Caco-2 (cell line): ENCODE measurements at regions of chr5 and their contacts with region 1.

Region 1: DNA sequence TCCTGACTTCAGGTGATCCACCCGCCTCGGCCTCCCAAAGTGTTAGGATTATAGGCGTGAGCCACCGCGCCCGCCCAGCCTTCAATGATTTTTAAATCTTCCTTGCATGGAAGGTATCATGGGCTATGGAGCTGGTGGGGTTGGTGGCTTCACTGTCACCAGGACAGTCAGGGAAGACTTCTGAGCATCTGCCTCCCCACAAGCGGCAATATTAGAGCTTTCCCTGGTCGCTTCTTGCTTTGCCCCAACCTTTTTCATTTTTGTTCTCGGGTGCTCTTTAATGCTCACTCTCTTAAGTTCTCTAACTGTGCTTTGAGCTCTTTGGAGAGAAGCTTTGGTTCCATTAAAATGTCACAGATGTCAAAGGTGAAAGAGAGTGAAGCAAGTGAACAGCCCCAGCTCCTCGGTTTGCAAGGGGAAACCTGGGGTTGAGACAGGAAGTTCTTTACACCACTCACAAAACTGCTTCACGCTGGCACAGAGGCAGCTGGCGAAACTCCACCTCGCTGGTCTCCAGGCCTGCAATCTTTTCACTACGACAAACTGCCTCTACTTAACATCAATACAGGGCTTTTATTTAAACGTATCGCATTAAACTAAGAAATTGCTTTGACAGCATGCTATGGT is 142.5 kb upstream of the RETREG1 start:
- DNase-seq: no peak
- H3K4me3 ChIP-seq: no peak overlapping the region
- H3K4me3 Mint-ChIP-seq: no peak overlapping the region
- H3K27ac Mint-ChIP-seq: peak overlapping the region; percentile 55
- H3K4me1 ChIP-seq: peaks cover 40% of the 10 kb centered on the region
- H3K4me1 Mint-ChIP-seq: peaks cover 7% of the 10 kb centered on the region
- H3K27me3 ChIP-seq: no peaks in the 10 kb centered on the region
- H3K27me3 Mint-ChIP-seq: no peaks in the 10 kb centered on the region
- CTCF ChIP-seq: no peak

Region 2: GRCh38 chr5:16690243-16690852 is 68.9 kb before region 1 on chr5:
- CTCF ChIA-PET with region 1: no interaction called
- POLR2A ChIA-PET with region 1: no interaction called
- intact Hi-C with region 1: loop called (anchors 10 kb)
- DNase-seq: peak; percentile 54 to 76
- H3K4me3 ChIP-seq: no peak overlapping the region
- H3K4me3 Mint-ChIP-seq: no peak overlapping the region
- H3K27ac Mint-ChIP-seq: peak overlapping the region; percentile 13
- H3K4me1 ChIP-seq: no peaks in the 10 kb centered on the region
- H3K4me1 Mint-ChIP-seq: no peaks in the 10 kb centered on the region
- H3K27me3 ChIP-seq: no peaks in the 10 kb centered on the region
- H3K27me3 Mint-ChIP-seq: no peaks in the 10 kb centered on the region
- CTCF ChIP-seq: peak; percentile 79 to 81

Region 3: DNA sequence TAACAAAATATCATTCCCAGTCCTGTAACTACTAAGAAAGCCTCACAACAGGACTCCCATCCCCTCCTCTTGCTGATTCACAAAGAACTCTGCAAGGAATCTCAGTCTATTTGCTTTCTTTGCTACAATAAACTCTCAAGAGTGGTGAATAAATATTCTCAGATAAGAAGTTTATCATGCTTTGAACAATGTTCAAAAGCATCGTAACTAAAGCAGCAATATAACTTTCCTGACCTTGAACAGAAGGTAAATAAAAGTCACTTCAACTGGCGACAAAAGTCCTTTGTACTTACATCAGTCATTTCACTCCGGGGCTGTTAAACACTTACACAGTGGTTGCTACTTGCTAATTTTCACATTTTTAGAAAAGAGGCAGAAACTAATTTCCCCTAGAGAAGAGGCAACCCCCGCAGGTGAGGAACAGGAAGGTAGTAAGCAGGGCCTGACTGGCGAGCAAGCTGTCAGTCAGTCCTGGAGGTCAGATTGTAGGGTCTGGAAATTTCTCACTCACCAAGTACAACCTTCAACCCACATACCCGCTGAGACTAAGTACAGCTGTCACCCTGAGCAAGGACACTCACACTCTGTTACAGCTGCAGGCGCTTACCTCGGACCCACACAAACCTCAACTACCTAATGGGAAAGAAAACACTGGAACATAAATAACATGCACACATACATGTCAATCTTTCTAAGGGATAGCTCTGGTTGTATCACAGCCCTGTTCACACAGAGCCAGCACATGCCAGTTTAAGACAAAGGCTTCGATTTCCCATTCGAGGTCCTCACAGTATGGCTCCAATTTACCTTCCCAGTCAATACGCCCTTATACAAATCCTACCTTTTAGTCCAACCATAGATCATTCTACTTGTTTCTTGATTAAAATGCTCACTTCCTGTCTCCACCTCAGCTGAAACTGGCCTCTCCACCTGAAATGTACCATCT is 37.8 kb before region 1 on chr5:
- CTCF ChIA-PET with region 1: no interaction called
- POLR2A ChIA-PET with region 1: no interaction called
- intact Hi-C with region 1: loop called (anchors 1 kb)
- DNase-seq: peak; percentile 69 to 73
- H3K4me3 ChIP-seq: no peak overlapping the region
- H3K4me3 Mint-ChIP-seq: peak overlapping the region; percentile 37
- H3K27ac Mint-ChIP-seq: peak overlapping the region; percentile 92
- H3K4me1 ChIP-seq: peaks cover 36% of the 10 kb centered on the region
- H3K4me1 Mint-ChIP-seq: peaks cover 20% of the 10 kb centered on the region
- H3K27me3 ChIP-seq: no peaks in the 10 kb centered on the region; the same call in 1 of the 2 replicates
- H3K27me3 Mint-ChIP-seq: no peaks in the 10 kb centered on the region
- CTCF ChIP-seq: no peak

Region 4: GRCh38 chr5:16736158-16736995 is 22.9 kb before region 1 on chr5:
- CTCF ChIA-PET with region 1: no interaction called
- POLR2A ChIA-PET with region 1: no interaction called
- intact Hi-C with region 1: loop called (anchors 1 kb)
- DNase-seq: peak; percentile 72 to 81
- H3K4me3 ChIP-seq: no peak overlapping the region
- H3K4me3 Mint-ChIP-seq: peak overlapping the region; percentile 12
- H3K27ac Mint-ChIP-seq: peak overlapping the region; percentile 91
- H3K4me1 ChIP-seq: peaks cover 20% of the 10 kb centered on the region
- H3K4me1 Mint-ChIP-seq: peaks cover 31% of the 10 kb centered on the region
- H3K27me3 ChIP-seq: no peaks in the 10 kb centered on the region
- H3K27me3 Mint-ChIP-seq: no peaks in the 10 kb centered on the region
- CTCF ChIP-seq: no peak

Region 5: DNA sequence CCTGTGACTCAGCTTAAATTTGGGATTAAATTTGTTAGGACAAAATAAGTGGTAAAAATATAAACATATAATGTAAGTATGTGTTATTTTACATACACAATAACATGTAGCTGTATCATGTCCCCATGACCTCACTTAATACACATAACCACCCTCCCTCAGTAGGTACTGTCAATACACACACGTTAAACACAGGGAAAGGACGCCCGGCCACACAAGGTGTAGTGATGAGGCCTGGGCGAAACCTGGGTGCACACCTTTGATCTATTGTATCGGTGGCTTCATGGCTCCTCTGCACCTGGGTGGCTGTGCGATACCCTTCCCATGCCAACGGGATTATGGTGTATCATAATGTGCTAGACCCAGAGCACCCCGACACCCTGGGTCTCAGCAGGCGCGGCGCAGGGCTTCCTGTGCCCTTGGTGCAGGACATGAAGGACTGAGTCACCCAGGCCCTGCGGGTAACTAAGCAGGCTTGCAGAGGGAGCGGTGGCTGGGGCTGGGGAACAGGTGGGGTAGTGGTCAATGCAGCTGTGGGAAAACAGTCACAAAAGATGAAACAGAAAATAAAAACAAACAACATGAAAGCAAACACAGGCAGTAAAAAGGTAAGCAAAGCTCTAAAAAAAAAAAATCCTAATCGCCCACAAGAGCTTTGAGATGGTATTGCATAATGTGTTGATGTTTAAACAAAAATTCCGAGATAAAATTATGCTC is 14.9 kb before region 1 on chr5:
- CTCF ChIA-PET with region 1: interaction called, 3 read pairs
- POLR2A ChIA-PET with region 1: no interaction called
- intact Hi-C with region 1: loop called (anchors 1 kb)
- DNase-seq: peak in 1 of 2 experiments; percentile 26
- H3K4me3 ChIP-seq: no peak overlapping the region
- H3K4me3 Mint-ChIP-seq: no peak overlapping the region
- H3K27ac Mint-ChIP-seq: peak overlapping the region; percentile 77
- H3K4me1 ChIP-seq: no peaks in the 10 kb centered on the region
- H3K4me1 Mint-ChIP-seq: peaks cover 9% of the 10 kb centered on the region
- H3K27me3 ChIP-seq: no peaks in the 10 kb centered on the region
- H3K27me3 Mint-ChIP-seq: no peaks in the 10 kb centered on the region
- CTCF ChIP-seq: no peak

Region 6: DNA sequence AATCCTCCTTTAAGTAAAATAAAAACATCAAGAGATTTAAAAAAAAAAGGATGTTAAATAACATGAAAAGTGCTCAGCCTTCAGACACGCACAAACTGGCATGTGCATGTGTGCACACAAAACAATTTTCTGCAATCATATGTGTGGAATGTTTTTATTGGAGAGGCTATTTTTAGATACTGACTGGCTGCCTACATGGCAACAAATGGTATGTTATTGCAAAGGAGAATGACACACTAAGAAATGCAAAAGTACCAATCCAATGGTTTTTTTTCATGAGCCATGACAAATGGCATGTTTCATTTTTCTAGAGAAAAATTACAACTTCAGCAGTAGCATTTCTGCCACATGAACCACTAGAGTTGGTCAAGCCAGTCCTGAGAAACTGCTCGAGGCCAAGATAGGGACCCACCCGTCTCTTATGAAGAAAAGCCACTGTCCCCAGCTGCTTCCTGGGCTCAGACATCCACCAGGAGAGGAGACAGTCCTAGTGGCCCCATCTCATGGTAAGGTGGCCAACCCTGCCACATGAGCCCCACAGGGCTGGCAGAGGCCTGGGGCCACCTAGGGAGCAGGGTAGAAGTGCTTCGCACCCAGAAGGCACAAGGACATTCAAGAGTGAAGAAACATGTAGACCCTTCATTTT is 60.4 kb after region 1 on chr5:
- CTCF ChIA-PET with region 1: interaction called, 11 read pairs
- POLR2A ChIA-PET with region 1: no interaction called
- intact Hi-C with region 1: no loop called
- DNase-seq: no peak
- H3K4me3 ChIP-seq: no peak overlapping the region
- H3K4me3 Mint-ChIP-seq: no peak overlapping the region
- H3K27ac Mint-ChIP-seq: no peak overlapping the region
- H3K4me1 ChIP-seq: peaks cover 3% of the 10 kb centered on the region; the same call in 1 of the 2 replicates
- H3K4me1 Mint-ChIP-seq: peaks cover 8% of the 10 kb centered on the region
- H3K27me3 ChIP-seq: no peaks in the 10 kb centered on the region
- H3K27me3 Mint-ChIP-seq: no peaks in the 10 kb centered on the region
- CTCF ChIP-seq: no peak

Region 7: DNA sequence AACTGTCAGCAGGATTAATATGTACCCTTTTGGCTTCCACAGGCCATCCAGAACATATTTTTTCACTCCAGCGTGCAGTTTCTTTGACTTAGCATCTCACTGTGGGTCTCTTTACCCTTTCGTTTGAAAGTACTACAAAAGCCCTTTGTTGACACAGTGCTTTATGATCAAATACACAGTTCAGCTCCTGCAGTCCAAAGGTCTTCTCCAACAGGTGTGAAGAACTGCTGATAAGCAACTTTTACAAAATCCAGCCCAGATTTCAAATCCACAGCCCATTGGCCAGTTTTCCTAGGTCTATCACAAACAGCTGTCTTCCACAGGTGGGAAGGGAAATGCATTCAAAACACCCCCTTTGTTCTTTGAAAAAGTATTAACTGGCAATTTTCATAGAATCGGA is 122.0 kb after region 1 on chr5:
- CTCF ChIA-PET with region 1: no interaction called
- POLR2A ChIA-PET with region 1: no interaction called
- intact Hi-C with region 1: loop called (anchors 5 kb)
- DNase-seq: peak; percentile 80 to 85
- H3K4me3 ChIP-seq: no peak overlapping the region; the same call in 1 of the 2 replicates
- H3K4me3 Mint-ChIP-seq: peak overlapping the region; percentile 73
- H3K27ac Mint-ChIP-seq: peak overlapping the region; percentile 90
- H3K4me1 ChIP-seq: peaks cover 80% of the 10 kb centered on the region
- H3K4me1 Mint-ChIP-seq: peaks cover 53% of the 10 kb centered on the region
- H3K27me3 ChIP-seq: no peaks in the 10 kb centered on the region
- H3K27me3 Mint-ChIP-seq: no peaks in the 10 kb centered on the region
- CTCF ChIP-seq: no peak

Region 8: GRCh38 chr5:17037751-17038150 is 278.5 kb after region 1 on chr5:
- CTCF ChIA-PET with region 1: no interaction called
- POLR2A ChIA-PET with region 1: no interaction called
- intact Hi-C with region 1: no loop called
- DNase-seq: no peak
- H3K4me3 ChIP-seq: no peak overlapping the region
- H3K4me3 Mint-ChIP-seq: no peak overlapping the region
- H3K27ac Mint-ChIP-seq: no peak overlapping the region
- H3K4me1 ChIP-seq: no peaks in the 10 kb centered on the region
- H3K4me1 Mint-ChIP-seq: no peaks in the 10 kb centered on the region
- H3K27me3 ChIP-seq: no peaks in the 10 kb centered on the region
- H3K27me3 Mint-ChIP-seq: no peaks in the 10 kb centered on the region
- CTCF ChIP-seq: no peak